ENCODE measurements at regions of chr1 and their contacts with region 1.

Region 1: GRCh38 chr1:198465201-198466144 is 75.0 kb downstream of the ATP6V1G3 start:
- DNase-seq: no peak
- ATAC-seq: peak; percentile 49
- H3K4me3 Mint-ChIP-seq: no peak overlapping the region
- H3K27ac Mint-ChIP-seq: no peak overlapping the region
- H3K4me1 Mint-ChIP-seq: no peaks in the 10 kb centered on the region
- H3K27me3 Mint-ChIP-seq: no peaks in the 10 kb centered on the region
- CTCF ChIP-seq: no peak

Region 2: GRCh38 chr1:197521118-197521739 is 944.2 kb before region 1 on chr1:
- CTCF ChIA-PET with region 1: interaction called, 8 read pairs
- POLR2A ChIA-PET with region 1: no interaction called
- intact Hi-C with region 1: loop called (anchors 1 kb)
- DNase-seq: no peak
- ATAC-seq: peak; percentile 42
- H3K4me3 Mint-ChIP-seq: no peak overlapping the region
- H3K27ac Mint-ChIP-seq: no peak overlapping the region
- H3K4me1 Mint-ChIP-seq: no peaks in the 10 kb centered on the region
- H3K27me3 Mint-ChIP-seq: no peaks in the 10 kb centered on the region
- CTCF ChIP-seq: peak; percentile 47

Region 3: GRCh38 chr1:197614916-197615692 is 850.4 kb before region 1 on chr1:
- CTCF ChIA-PET with region 1: interaction called, 5 read pairs
- POLR2A ChIA-PET with region 1: no interaction called
- intact Hi-C with region 1: loop called (anchors 2 kb)
- DNase-seq: no peak
- ATAC-seq: no peak
- H3K4me3 Mint-ChIP-seq: no peak overlapping the region
- H3K27ac Mint-ChIP-seq: no peak overlapping the region
- H3K4me1 Mint-ChIP-seq: no peaks in the 10 kb centered on the region
- H3K27me3 Mint-ChIP-seq: no peaks in the 10 kb centered on the region
- CTCF ChIP-seq: no peak

Measured in activated B cell treated with CpG ODN at 0.5 μM for 24 hours (primary cell).